ENCODE measurements at regions of chr11 and their contacts with region 1.

Region 1: DNA sequence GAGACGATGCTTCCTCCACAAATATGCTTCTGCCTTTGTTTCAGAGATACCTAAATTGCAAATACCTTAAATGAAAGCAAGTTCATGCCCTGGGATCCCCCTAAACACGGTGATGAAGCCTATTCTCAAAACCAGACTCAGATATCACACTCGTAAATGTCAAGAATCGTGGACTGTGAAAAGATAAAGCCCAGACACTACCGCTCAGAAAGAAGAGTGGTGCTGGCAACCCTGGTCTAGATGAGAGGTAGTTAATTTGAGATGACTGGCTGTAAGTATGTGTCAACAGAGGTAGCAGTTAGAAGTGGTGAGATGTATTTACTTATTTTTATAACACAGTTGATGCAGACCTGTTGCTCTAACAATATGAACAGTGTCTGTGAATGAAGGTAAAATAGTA is 2.5 kb downstream of the OVCH2 start:
- DNase-seq: no peak
- H3K4me3 ChIP-seq: no peak overlapping the region
- H3K27ac ChIP-seq: no peak overlapping the region
- H3K4me1 ChIP-seq: no peaks in the 10 kb centered on the region
- H3K27me3 ChIP-seq: peaks cover 3% of the 10 kb centered on the region
- CTCF ChIP-seq: no peak

Region 2: GRCh38 chr11:7749456-7749855 is 45.7 kb after region 1 on chr11:
- CTCF ChIA-PET with region 1: no interaction called
- dilution Hi-C with region 1: loop called (anchors 5 kb)
- in situ Hi-C with region 1: no loop called
- intact Hi-C with region 1: no loop called
- DNase-seq: peak; percentile 60
- H3K4me3 ChIP-seq: no peak overlapping the region
- H3K27ac ChIP-seq: no peak overlapping the region
- H3K4me1 ChIP-seq: no peaks in the 10 kb centered on the region
- H3K27me3 ChIP-seq: no peaks in the 10 kb centered on the region
- CTCF ChIP-seq: no peak

Region 3: DNA sequence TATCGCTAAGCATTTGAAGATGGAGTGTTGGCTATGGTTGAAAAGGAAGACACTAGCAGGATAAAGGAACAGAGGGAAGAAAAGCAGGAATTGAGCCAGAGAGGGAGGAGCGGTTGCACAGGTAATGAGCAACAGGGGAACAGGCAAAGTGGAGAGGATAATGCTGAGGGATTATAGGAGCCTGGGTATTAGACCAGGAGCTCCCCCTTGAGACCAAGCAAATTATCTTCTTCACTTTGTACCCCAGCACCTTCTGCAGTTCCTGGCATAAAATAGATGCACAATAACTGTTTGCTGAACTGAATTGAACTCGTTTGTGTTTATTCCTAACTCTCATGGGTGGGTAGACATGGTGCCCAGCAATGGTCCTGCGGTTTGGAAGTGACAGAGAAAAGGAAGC is 147.7 kb after region 1 on chr11:
- CTCF ChIA-PET with region 1: no interaction called
- dilution Hi-C with region 1: no loop called
- in situ Hi-C with region 1: no loop called
- intact Hi-C with region 1: loop called (anchors 10 kb)
- DNase-seq: peak; percentile 19
- H3K4me3 ChIP-seq: no peak overlapping the region
- H3K27ac ChIP-seq: no peak overlapping the region
- H3K4me1 ChIP-seq: no peaks in the 10 kb centered on the region
- H3K27me3 ChIP-seq: no peaks in the 10 kb centered on the region
- CTCF ChIP-seq: peak; percentile 14 to 41

Measured in mammary epithelial cell (primary cell).